Activated naive CD4-positive, alpha-beta T cell treated with anti-CD3 and anti-CD28 coated beads, Interleukin-2, amount 10 ng/mL, durations not matched to agents 7 days and 5 days (primary cell): ENCODE measurements at regions of chr9 and their contacts with region 1.

Region 1: DNA sequence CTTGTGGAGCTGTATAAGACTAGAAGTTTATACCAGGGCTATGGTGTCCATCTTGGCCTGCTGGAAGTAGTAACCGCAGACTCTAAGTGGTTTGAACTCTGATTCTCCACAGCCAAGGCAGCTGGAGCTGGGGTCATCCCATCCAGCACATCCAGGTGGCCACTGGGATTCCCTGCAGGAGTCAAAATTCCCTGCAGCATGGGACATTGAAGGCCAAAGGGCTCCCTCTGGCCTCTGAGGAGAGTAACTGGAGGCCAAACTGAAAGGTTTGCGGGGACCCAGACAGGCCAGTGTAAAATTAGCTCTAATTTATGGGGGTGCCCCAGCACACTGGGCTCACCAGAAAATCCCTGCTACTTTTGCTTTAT is 12.2 kb upstream of the PRXL2C start:
- DNase-seq: no peak
- H3K4me3 Mint-ChIP-seq: no peak overlapping the region
- H3K27ac Mint-ChIP-seq: no peak overlapping the region
- H3K4me1 Mint-ChIP-seq: peaks cover 3% of the 10 kb centered on the region
- H3K27me3 Mint-ChIP-seq: peaks cover 7% of the 10 kb centered on the region

Region 2: GRCh38 chr9:96327694-96328352 is 339.5 kb before region 1 on chr9:
- CTCF ChIA-PET with region 1: interaction called, 26 read pairs
- DNase-seq: peak; percentile 58
- H3K4me3 Mint-ChIP-seq: no peak overlapping the region
- H3K27ac Mint-ChIP-seq: no peak overlapping the region
- H3K4me1 Mint-ChIP-seq: no peaks in the 10 kb centered on the region
- H3K27me3 Mint-ChIP-seq: peaks cover 4% of the 10 kb centered on the region

Region 3: DNA sequence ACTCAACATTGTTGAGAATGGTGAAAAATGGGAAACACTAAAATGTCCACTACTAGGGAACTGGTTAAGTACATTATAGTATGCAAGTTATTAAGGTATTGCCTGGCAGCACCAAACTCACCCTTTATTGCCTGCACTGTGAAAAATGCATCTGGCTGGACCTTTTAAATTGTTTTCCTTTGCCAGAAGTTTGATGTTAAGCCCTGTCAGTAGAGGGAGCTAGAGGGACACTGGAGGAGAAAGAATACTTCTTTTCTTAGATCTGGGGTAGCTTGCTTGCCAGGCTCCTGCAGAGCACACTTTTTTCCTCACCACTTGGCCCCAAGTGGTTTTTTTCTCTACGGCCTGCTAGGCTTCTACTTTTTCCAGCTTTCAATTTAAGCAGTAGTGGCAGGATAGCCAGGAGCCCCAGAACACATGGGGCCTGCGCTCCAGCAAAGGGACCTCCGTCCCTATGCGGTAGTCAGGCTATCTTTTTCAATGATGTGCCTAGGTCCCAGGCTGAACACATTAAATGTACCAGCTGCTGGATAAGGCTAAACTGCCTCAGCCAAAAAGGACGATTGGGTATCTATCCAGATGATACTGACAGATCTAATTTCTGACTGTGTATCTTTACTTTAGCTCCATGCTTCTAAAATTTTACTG is 225.4 kb before region 1 on chr9:
- CTCF ChIA-PET with region 1: interaction called, 24 read pairs
- DNase-seq: peak; percentile 24
- H3K4me3 Mint-ChIP-seq: no peak overlapping the region
- H3K27ac Mint-ChIP-seq: no peak overlapping the region
- H3K4me1 Mint-ChIP-seq: no peaks in the 10 kb centered on the region
- H3K27me3 Mint-ChIP-seq: peaks cover 6% of the 10 kb centered on the region

Region 4: GRCh38 chr9:96655198-96655851 is 12.0 kb before region 1 on chr9 and contains the start of gene PRXL2C:
- CTCF ChIA-PET with region 1: interaction called, 10 read pairs
- DNase-seq: peak; percentile 86
- H3K4me3 Mint-ChIP-seq: peak within 1 kb of the TSS; percentile 90
- H3K27ac Mint-ChIP-seq: peak within 1 kb of the TSS; percentile 81
- H3K4me1 Mint-ChIP-seq: peaks cover 16% of the 10 kb centered on the region
- H3K27me3 Mint-ChIP-seq: peaks cover 17% of the 10 kb centered on the region